HepG2 (cell line): ENCODE measurements at regions of chr20 and their contacts with region 1.

Region 1: DNA sequence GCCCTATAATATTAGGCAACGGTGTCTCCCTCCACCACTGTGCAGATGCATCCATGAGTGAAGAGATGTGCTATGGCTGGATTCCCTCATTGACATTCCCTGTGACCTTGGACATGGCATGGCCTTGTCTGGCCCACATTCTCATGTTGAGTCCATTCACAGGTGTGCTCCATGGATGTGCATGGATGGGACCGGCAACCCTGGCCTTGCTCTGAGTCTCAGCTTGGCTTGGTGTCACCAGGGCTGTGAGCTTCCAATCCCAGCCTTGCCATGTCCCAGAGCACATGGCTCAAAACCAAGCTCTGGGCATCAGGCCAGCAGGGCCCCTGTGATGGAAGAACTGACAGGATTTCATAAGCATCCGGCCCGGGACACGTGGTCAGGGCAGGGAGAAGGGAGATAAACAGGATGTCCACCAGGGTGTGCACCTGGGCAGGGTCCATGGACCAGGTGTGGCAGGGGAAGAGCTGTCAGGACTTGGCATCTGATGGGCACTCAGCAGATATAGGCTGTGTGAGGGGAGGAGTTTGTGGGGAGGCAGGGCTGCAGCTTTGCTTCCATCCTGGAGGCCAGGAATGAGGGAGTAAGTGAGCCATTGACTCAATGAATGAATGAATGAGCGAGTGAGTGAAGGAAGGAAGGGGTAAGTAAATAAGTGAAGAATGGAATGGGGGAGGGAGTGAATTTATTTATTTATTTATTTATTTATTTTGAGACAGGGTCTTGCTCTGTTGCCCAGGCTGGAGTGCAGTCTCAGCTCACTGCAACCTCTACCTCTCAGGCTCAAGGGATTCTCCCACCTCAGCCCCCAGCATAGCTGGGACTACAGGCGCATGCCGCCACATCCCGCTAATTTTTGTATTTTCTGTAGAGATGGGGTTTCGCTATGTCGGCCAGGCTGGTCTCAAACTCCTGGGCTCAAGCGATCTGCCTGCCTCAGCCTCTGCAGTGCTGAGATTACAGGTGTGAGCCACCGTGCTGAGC is 15.7 kb downstream of the NRSN2 start:
- DNase-seq: peak; percentile 99
- ATAC-seq: peak; percentile 87
- H3K4me3 ChIP-seq: no peak overlapping the region
- H3K27ac ChIP-seq: peak overlapping the region; percentile 49
- H3K4me1 ChIP-seq: peaks cover 74% of the 10 kb centered on the region
- H3K27me3 ChIP-seq: no peaks in the 10 kb centered on the region
- CTCF ChIP-seq: peak; percentile 100
- EP300 ChIP-seq: peak in 1 of 2 experiments; percentile 92; a peak in 3 of 4 replicates
- POLR2A ChIP-seq: peak; percentile 46 to 53
- RAD21 ChIP-seq: peak; percentile 100

Region 2: DNA sequence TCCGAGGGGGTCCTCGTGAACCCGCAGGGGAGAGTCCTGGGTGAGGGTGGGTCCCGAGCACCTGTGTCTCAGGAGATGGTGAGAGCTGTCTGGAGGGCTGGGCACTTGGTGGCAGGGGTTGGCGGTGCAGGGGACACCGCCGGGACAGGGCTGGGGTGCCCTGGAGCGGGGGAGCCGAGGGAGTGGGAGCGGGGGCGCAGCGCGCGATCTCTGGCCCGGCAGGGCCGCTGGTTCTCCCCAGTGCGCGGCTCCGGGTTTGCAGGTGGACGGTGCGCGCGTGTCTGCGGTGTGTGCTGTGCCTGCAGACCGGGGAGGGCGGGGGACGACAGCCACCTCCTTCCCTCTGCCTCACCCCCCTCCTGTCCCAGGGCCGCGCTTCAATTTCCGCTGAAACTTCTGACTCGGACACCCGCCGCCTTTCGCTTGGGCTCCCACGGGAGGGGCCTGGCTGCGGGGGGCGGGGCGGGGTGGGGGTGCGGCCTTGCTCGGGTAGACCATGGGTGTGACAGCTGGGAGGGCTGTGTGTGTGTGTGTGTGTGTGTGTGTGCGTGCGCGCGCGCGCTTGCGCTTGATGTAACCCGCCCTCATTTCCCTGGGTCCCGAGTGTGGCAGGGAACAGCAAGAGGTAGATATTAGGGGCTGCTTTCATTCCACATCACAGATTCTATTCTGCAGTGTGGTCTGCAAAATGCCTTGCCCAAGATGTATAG is 19.2 kb after region 1 on chr20:
- CTCF ChIA-PET with region 1: interaction called, 10 read pairs
- POLR2A ChIA-PET with region 1: interaction called, 1,587 read pairs
- in situ Hi-C with region 1: no loop called
- intact Hi-C with region 1: loop called (anchors 1 kb)
- DNase-seq: peak; percentile 85
- ATAC-seq: peak; percentile 69
- H3K4me3 ChIP-seq: peak overlapping the region; percentile 93 to 98 (median 97)
- H3K27ac ChIP-seq: peak overlapping the region; percentile 93
- H3K4me1 ChIP-seq: peaks cover 74% of the 10 kb centered on the region
- H3K27me3 ChIP-seq: no peaks in the 10 kb centered on the region; a peak in 1 of 5 replicates
- CTCF ChIP-seq: no peak; the same call in 1 of the 2 replicates
- EP300 ChIP-seq: 0 out of 4 replicates have a peak, but pooled peaks of 1 of the 2 experiments have one; percentile 37
- POLR2A ChIP-seq: peak; percentile 90
- RAD21 ChIP-seq: peak; percentile 72

Region 3: DNA sequence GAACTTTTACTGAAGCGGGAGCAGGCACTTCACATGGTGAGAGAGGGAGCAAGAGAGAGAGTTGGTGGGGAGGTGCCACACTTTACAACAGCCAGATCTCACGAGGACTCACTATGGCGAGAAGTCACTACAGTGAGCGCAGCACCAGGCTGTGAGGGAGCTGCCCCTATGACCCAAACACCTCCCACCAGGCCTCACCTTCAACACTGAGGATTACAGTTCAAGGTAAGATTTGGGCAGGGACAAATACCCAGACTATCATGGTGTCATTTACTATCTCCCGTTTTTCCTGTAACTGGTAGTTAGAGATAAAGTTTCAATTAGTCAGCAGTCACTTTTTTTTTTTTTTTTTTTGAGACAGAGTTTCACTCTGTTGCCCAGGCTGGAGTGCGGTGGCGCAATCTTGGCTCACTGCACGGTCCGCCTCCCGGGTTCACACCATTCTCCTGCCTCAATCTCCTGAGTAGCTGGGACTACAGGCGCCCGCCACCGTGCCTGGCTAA is 53.3 kb after region 1 on chr20:
- CTCF ChIA-PET with region 1: no interaction called
- POLR2A ChIA-PET with region 1: interaction called, 19 read pairs
- in situ Hi-C with region 1: no loop called
- intact Hi-C with region 1: no loop called
- DNase-seq: no peak
- ATAC-seq: no peak
- H3K4me3 ChIP-seq: no peak overlapping the region
- H3K27ac ChIP-seq: peak overlapping the region; percentile 30
- H3K4me1 ChIP-seq: peaks cover 48% of the 10 kb centered on the region
- H3K27me3 ChIP-seq: no peaks in the 10 kb centered on the region
- CTCF ChIP-seq: no peak
- EP300 ChIP-seq: no peak
- POLR2A ChIP-seq: no peak
- RAD21 ChIP-seq: no peak

Region 4: GRCh38 chr20:462199-462991 is 99.8 kb after region 1 on chr20 and contains the start of gene TBC1D20:
- CTCF ChIA-PET with region 1: no interaction called
- POLR2A ChIA-PET with region 1: interaction called, 10 read pairs
- in situ Hi-C with region 1: no loop called
- intact Hi-C with region 1: no loop called
- DNase-seq: peak; percentile 87
- ATAC-seq: peak; percentile 95
- H3K4me3 ChIP-seq: peak within 1 kb of the TSS; percentile 81 to 96 (median 91)
- H3K27ac ChIP-seq: peak within 1 kb of the TSS; percentile 75
- H3K4me1 ChIP-seq: peaks cover 41% of the 10 kb centered on the region
- H3K27me3 ChIP-seq: no peaks in the 10 kb centered on the region; a peak in 2 of 5 replicates
- CTCF ChIP-seq: peak; percentile 74
- EP300 ChIP-seq: peak in 1 of 2 experiments; percentile 61; a peak in 1 of 4 replicates
- POLR2A ChIP-seq: peak; percentile 76 to 93
- RAD21 ChIP-seq: peak; percentile 37
- total RNA-seq, gene TBC1D20: 36.6 and 45.9 TPM in 2 replicates

Region 5: DNA sequence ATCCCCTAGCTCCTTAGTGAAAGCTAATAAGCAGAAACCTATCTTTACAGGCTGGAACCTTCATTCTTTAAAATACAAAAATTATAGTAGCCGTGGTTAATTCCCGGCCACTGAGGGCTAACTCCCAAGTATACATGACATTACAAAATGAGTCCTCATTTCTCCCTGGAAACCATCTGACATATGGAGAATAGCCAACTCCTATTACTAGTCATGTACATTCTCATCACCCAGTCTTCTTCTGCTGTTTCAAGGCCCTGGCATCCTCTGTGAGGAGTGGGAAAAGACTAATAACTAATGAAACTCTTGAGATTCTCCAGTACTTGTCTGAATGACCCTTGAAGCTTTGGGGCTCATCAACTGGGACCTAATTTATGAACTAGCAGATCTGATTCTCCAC is 150.9 kb after region 1 on chr20:
- CTCF ChIA-PET with region 1: no interaction called
- POLR2A ChIA-PET with region 1: interaction called, 10 read pairs
- in situ Hi-C with region 1: no loop called
- intact Hi-C with region 1: no loop called
- DNase-seq: no peak
- ATAC-seq: no peak
- H3K4me3 ChIP-seq: no peak overlapping the region
- H3K27ac ChIP-seq: no peak overlapping the region
- H3K4me1 ChIP-seq: peaks cover 91% of the 10 kb centered on the region
- H3K27me3 ChIP-seq: no peaks in the 10 kb centered on the region
- CTCF ChIP-seq: no peak
- EP300 ChIP-seq: no peak
- POLR2A ChIP-seq: no peak
- RAD21 ChIP-seq: no peak

Region 6: GRCh38 chr20:588932-589672 is 226.5 kb after region 1 on chr20:
- CTCF ChIA-PET with region 1: no interaction called
- POLR2A ChIA-PET with region 1: no interaction called
- in situ Hi-C with region 1: no loop called
- intact Hi-C with region 1: no loop called
- DNase-seq: no peak
- ATAC-seq: peak; percentile 55
- H3K4me3 ChIP-seq: no peak overlapping the region
- H3K27ac ChIP-seq: no peak overlapping the region
- H3K4me1 ChIP-seq: peaks cover 8% of the 10 kb centered on the region; the same call in 1 of the 2 replicates
- H3K27me3 ChIP-seq: peaks cover 1 to 24% of the 10 kb centered on the region in 2 experiments; a peak in 4 of 5 replicates
- CTCF ChIP-seq: peak; percentile 30
- EP300 ChIP-seq: no peak
- POLR2A ChIP-seq: no peak
- RAD21 ChIP-seq: no peak

Region 7: GRCh38 chr20:667391-667964 is 304.9 kb after region 1 on chr20:
- CTCF ChIA-PET with region 1: no interaction called
- POLR2A ChIA-PET with region 1: no interaction called
- in situ Hi-C with region 1: no loop called
- intact Hi-C with region 1: no loop called
- DNase-seq: peak; percentile 48
- ATAC-seq: peak; percentile 55
- H3K4me3 ChIP-seq: no peak overlapping the region
- H3K27ac ChIP-seq: no peak overlapping the region
- H3K4me1 ChIP-seq: peaks cover 6% of the 10 kb centered on the region
- H3K27me3 ChIP-seq: peaks cover 13 to 64% of the 10 kb centered on the region in 2 experiments; a peak in 4 of 5 replicates
- CTCF ChIP-seq: peak; percentile 89
- EP300 ChIP-seq: no peak
- POLR2A ChIP-seq: no peak
- RAD21 ChIP-seq: peak; percentile 79